ENCODE measurements at regions of chr7 and their contacts with region 1.

Region 1: DNA sequence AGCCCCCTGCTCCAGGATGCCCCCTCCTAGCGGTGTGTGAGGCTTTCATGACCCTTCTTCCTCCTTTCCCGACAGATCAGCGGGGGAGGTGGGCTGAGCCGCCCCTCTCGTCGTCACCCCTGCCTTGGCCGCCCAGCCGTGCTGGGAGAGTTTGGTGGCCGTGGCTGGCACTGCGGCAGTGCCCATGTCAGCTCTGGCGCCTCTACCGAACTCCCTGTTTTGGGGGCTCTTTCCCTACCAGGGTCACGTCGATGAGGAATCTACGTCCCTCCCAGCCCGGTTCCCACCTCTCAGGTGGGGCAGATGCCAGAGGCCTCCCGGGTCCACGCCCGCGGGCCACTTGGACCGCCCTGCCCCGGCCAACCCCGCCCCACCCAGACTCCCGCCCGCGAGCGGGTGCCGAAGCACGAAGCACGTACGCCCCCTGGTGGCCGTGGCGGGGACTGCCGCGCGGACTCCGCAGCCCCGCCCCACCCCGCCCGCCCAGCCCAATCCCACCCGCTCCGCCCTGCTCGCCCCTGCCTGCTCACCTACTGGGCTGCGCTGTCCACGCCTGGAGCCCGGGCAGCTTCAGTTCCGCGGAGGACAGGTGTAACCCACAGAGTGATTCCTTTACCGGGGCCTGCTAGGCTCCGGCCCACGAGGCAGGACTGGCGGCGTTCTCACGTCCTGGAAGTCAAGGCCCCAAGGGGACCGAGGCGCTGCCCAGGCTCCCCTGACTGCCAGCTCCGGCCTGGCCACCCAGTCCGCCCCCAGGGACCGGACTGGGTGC is 127.1 kb downstream of the UBE2H start:
- DNase-seq: peak; percentile 64 to 91
- ATAC-seq: peak; percentile 73 to 83
- H3K4me3 ChIP-seq: peak overlapping the region; percentile 67
- H3K27ac ChIP-seq: peak overlapping the region; percentile 96 to 98
- H3K4me1 ChIP-seq: peaks cover 34% of the 10 kb centered on the region
- CTCF ChIP-seq: peak; percentile 96
- EP300 ChIP-seq: peak in 1 of 2 experiments; percentile 14; a peak in 1 of 5 replicates
- POLR2A ChIP-seq: peak; percentile 54
- RAD21 ChIP-seq: peak; percentile 71 to 97

Region 2: GRCh38 chr7:129664029-129665012 is 161.4 kb before region 1 on chr7:
- CTCF ChIA-PET with region 1: interaction called, 123 read pairs
- POLR2A ChIA-PET with region 1: interaction called, 6 read pairs
- DNase-seq: peak; percentile 68 to 75
- ATAC-seq: peak; percentile 85 to 86
- H3K4me3 ChIP-seq: no peak overlapping the region
- H3K27ac ChIP-seq: peak overlapping the region; percentile 68 to 85
- H3K4me1 ChIP-seq: peaks cover 27% of the 10 kb centered on the region
- CTCF ChIP-seq: peak; percentile 87
- EP300 ChIP-seq: no peak
- POLR2A ChIP-seq: no peak
- RAD21 ChIP-seq: peak; percentile 84 to 90

Region 3: GRCh38 chr7:129793506-129794310 is 32.0 kb before region 1 on chr7:
- CTCF ChIA-PET with region 1: interaction called, 14 read pairs
- POLR2A ChIA-PET with region 1: no interaction called
- DNase-seq: no peak
- ATAC-seq: peak in 1 of 2 experiments; percentile 26; a peak in 2 of 6 replicates
- H3K4me3 ChIP-seq: no peak overlapping the region
- H3K27ac ChIP-seq: no peak overlapping the region
- H3K4me1 ChIP-seq: no peaks in the 10 kb centered on the region
- CTCF ChIP-seq: no peak
- EP300 ChIP-seq: no peak
- POLR2A ChIP-seq: no peak
- RAD21 ChIP-seq: no peak

Region 4: DNA sequence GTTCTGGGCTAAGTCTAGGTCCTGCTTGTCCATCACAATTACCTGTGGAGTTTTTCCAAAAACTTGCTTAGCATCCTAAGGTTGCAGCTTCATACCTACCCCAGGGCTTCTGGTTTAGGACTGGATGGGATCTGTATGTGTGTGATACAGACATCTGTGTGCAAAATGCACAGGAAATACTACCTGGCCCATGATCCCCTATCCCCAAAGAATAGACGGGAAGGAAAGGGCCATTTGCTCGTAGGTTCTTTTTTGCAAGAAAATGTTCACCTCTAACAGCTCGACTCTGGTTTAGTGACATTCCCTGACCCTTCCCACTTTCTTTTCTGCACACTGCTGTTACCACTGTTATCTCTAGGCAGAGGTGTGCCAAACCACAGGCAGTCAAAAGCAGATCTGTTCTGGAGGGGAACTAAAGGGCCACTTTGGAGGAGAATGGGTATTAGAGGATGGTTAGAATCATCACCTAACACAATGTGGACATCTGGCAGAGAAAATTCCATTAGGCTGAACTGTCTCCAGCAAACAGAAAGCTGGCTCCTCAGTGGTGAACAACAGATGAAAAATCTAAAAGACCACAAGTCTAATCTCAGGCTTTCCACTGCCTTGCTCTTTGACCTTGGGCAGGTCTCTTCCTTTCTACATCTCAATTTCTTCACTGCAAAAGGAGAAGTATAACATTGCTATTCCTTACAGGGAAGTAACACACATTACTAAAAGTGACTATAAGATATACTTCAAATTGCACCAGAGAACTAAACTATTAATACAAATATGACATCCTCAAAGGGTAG is 19.7 kb after region 1 on chr7:
- CTCF ChIA-PET with region 1: interaction called, 36 read pairs
- POLR2A ChIA-PET with region 1: no interaction called
- DNase-seq: no peak
- ATAC-seq: peak; percentile 68 to 76
- H3K4me3 ChIP-seq: no peak overlapping the region
- H3K27ac ChIP-seq: peak overlapping the region; percentile 71 to 83
- H3K4me1 ChIP-seq: peaks cover 66% of the 10 kb centered on the region
- CTCF ChIP-seq: no peak
- EP300 ChIP-seq: no peak
- POLR2A ChIP-seq: no peak
- RAD21 ChIP-seq: no peak

Region 5: GRCh38 chr7:129875745-129876411 is 50.2 kb after region 1 on chr7:
- CTCF ChIA-PET with region 1: interaction called, 13 read pairs
- POLR2A ChIA-PET with region 1: no interaction called
- DNase-seq: peak; percentile 15 to 30
- ATAC-seq: peak; percentile 78 to 80
- H3K4me3 ChIP-seq: peak overlapping the region; percentile 31
- H3K27ac ChIP-seq: peak overlapping the region; percentile 68 to 69
- H3K4me1 ChIP-seq: peaks cover 37% of the 10 kb centered on the region
- CTCF ChIP-seq: no peak
- EP300 ChIP-seq: no peak
- POLR2A ChIP-seq: no peak
- RAD21 ChIP-seq: no peak

Region 6: DNA sequence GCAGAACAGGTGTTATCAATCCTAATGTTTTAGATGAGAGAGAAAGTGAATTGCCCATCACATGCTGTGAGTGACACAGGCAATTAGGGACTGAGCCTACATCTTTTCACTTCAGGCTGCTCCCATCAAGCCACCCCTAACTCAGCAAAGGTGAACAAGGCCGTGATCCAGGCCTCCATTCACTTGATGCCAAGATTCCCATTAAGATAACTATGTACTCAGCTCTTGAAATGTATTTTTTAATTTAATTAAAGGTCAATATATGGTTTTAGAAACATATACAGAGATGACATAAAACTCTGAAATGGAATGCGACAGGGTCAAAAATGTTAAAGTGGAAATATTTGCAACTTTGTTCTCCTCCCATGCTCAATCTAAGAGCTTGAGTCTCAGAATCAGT is 155.0 kb after region 1 on chr7:
- CTCF ChIA-PET with region 1: interaction called, 12 read pairs
- POLR2A ChIA-PET with region 1: no interaction called
- DNase-seq: no peak
- ATAC-seq: no peak
- H3K4me3 ChIP-seq: no peak overlapping the region
- H3K27ac ChIP-seq: no peak overlapping the region
- H3K4me1 ChIP-seq: peaks cover 8% of the 10 kb centered on the region; the same call in 1 of the 3 replicates
- CTCF ChIP-seq: no peak
- EP300 ChIP-seq: no peak
- POLR2A ChIP-seq: no peak
- RAD21 ChIP-seq: no peak

Region 7: GRCh38 chr7:130037703-130038102 is 212.0 kb after region 1 on chr7:
- CTCF ChIA-PET with region 1: no interaction called
- POLR2A ChIA-PET with region 1: no interaction called
- DNase-seq: peak in 1 of 2 experiments; percentile 24
- ATAC-seq: peak in 1 of 2 experiments; percentile 74; a peak in 3 of 6 replicates
- H3K4me3 ChIP-seq: no peak overlapping the region
- H3K27ac ChIP-seq: no peak overlapping the region
- H3K4me1 ChIP-seq: no peaks in the 10 kb centered on the region
- CTCF ChIP-seq: peak; percentile 54
- EP300 ChIP-seq: no peak
- POLR2A ChIP-seq: no peak
- RAD21 ChIP-seq: 0 out of 5 replicates have a peak, but pooled peaks of 1 of the 2 experiments have one; percentile 21

Region 8: DNA sequence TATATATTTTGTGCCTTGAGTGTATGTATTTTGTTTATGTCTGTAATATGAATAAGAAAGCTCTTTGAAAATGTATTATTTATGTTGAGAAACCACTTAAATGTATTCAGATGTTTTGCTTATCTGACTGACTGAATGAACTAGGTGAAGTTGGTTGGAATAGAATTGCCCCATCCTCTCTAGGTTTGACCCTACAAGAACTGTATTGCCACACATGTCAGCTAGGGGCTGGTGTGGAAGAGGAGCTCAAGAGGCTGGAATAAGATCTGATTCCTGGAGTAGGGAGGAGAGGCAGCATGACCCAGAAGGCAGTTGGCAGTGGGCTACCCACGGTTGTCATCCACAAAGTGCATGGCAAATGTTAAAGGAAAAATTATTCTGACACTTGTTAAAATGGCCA is 391.1 kb after region 1 on chr7:
- CTCF ChIA-PET with region 1: no interaction called
- POLR2A ChIA-PET with region 1: no interaction called
- DNase-seq: no peak
- ATAC-seq: peak; percentile 43 to 54; a peak in 2 of 6 replicates
- H3K4me3 ChIP-seq: no peak overlapping the region
- H3K27ac ChIP-seq: no peak overlapping the region
- H3K4me1 ChIP-seq: no peaks in the 10 kb centered on the region
- CTCF ChIP-seq: no peak
- EP300 ChIP-seq: no peak
- POLR2A ChIP-seq: no peak
- RAD21 ChIP-seq: no peak

Region 9: DNA sequence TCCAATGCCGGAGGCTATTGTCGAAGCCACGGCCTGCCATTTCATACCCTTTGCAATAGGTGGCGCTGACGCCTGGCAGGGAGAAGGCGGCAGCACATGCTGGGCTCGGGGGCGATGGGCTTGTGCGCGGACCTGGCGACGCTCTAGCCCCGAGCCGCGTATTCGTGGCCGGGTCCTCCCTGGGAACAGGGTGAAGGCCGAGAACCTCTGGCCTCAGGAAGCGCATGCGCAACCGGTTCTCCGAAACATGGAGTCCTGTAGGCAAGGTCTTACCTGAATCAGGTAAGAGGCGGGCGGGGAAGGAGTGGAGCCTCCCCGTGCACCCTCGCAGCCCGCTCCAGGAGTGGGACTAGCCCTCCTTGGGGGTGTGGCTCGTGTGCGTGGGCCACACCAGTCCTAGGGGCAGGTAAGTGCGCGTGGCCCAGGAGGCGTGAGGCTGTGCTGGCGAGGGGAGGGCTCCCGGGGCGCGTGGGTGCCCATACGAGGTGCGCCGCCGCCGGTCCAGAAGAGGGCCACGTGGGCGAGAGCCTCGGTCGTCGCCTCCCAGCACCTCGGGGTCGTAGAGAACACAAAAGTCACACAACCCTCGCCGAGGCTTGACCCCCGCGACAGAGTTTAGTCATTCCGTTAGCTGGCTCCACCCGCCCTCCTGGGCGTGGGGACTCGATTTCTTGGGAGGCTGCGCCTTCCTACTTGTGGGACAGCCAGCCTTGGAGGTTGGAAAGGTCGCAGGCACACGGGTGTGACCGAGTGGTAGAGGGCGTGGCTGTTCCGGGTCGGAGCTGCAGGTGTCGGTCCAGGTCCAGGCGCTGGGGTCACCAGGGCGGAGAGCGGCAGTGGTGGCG is 660.7 kb after region 1 on chr7:
- CTCF ChIA-PET with region 1: no interaction called
- POLR2A ChIA-PET with region 1: no interaction called
- DNase-seq: peak; percentile 91 to 95
- ATAC-seq: peak; percentile 95 to 97
- H3K4me3 ChIP-seq: peak overlapping the region; percentile 54
- H3K27ac ChIP-seq: peak overlapping the region; percentile 76 to 90
- H3K4me1 ChIP-seq: no peaks in the 10 kb centered on the region
- CTCF ChIP-seq: peak; percentile 85
- EP300 ChIP-seq: no peak
- POLR2A ChIP-seq: peak; percentile 67
- RAD21 ChIP-seq: peak; percentile 59 to 62; a peak in 4 of 5 replicates

Measured in A549 (cell line).